Endothelial cell of umbilical vein (primary cell): ENCODE measurements at regions of chr3 and their contacts with region 1.

Region 1: GRCh38 chr3:127822698-127823425 is 547 bp upstream of the MGLL start:
- DNase-seq: no peak
- H3K4me3 ChIP-seq: peak overlapping the region; percentile 65 to 98 (median 69)
- H3K27ac ChIP-seq: peak overlapping the region; percentile 44
- H3K4me1 ChIP-seq: peaks cover 23% of the 10 kb centered on the region
- H3K27me3 ChIP-seq: no peaks in the 10 kb centered on the region
- CTCF ChIP-seq: peak in 1 of 2 donors; percentile 4
- POLR2A ChIP-seq: peak; percentile 39

Region 2: GRCh38 chr3:127684871-127685707 is 137.8 kb before region 1 on chr3:
- CTCF ChIA-PET with region 1: interaction called, 31 read pairs
- POLR2A ChIA-PET with region 1: no interaction called
- dilution Hi-C with region 1: no loop called
- intact Hi-C with region 1: no loop called
- DNase-seq: no peak
- H3K4me3 ChIP-seq: no peak overlapping the region
- H3K27ac ChIP-seq: no peak overlapping the region
- H3K4me1 ChIP-seq: no peaks in the 10 kb centered on the region
- H3K27me3 ChIP-seq: no peaks in the 10 kb centered on the region
- CTCF ChIP-seq: no peak
- POLR2A ChIP-seq: no peak

Region 3: GRCh38 chr3:127710155-127710941 is 112.5 kb before region 1 on chr3:
- CTCF ChIA-PET with region 1: interaction called, 4 read pairs
- POLR2A ChIA-PET with region 1: no interaction called
- dilution Hi-C with region 1: no loop called
- intact Hi-C with region 1: loop called (anchors 1 kb)
- DNase-seq: no peak
- H3K4me3 ChIP-seq: no peak overlapping the region
- H3K27ac ChIP-seq: no peak overlapping the region
- H3K4me1 ChIP-seq: peaks cover 21% of the 10 kb centered on the region
- H3K27me3 ChIP-seq: no peaks in the 10 kb centered on the region
- CTCF ChIP-seq: no peak
- POLR2A ChIP-seq: no peak

Region 4: GRCh38 chr3:127747723-127748521 is 74.9 kb before region 1 on chr3:
- CTCF ChIA-PET with region 1: interaction called, 6 read pairs
- POLR2A ChIA-PET with region 1: no interaction called
- dilution Hi-C with region 1: no loop called
- intact Hi-C with region 1: loop called (anchors 2 kb)
- DNase-seq: peak; percentile 79
- H3K4me3 ChIP-seq: no peak overlapping the region
- H3K27ac ChIP-seq: peak overlapping the region; percentile 44
- H3K4me1 ChIP-seq: peaks cover 26% of the 10 kb centered on the region
- H3K27me3 ChIP-seq: no peaks in the 10 kb centered on the region
- CTCF ChIP-seq: no peak
- POLR2A ChIP-seq: no peak

Region 5: GRCh38 chr3:127791211-127791946 is 31.5 kb before region 1 on chr3:
- CTCF ChIA-PET with region 1: interaction called, 23 read pairs
- POLR2A ChIA-PET with region 1: no interaction called
- dilution Hi-C with region 1: no loop called
- intact Hi-C with region 1: no loop called
- DNase-seq: no peak
- H3K4me3 ChIP-seq: no peak overlapping the region
- H3K27ac ChIP-seq: no peak overlapping the region
- H3K4me1 ChIP-seq: peaks cover 6% of the 10 kb centered on the region
- H3K27me3 ChIP-seq: no peaks in the 10 kb centered on the region
- CTCF ChIP-seq: peak in 1 of 2 donors; percentile 4
- POLR2A ChIP-seq: no peak